B cell (primary cell): ENCODE measurements at regions of chr4 and their contacts with region 1.

Region 1: DNA sequence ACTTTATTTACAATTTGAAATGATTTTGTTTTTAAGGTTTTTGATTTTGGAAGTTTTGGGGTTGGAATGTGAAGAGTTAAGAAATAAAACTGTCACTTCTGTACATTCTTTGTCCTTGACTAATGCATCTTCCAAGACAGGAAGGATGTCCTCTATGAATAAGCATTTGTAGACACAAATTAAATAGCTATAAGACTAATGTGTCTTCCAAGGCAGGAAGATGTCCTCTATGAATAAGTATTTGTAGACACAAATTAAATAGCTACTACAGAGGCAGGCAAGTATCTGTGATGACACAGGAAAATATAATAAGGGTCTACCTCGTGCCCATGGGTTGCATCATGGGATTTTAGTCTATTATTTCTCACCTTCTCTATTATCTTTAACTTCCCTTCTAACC is 14.5 kb downstream of the PRSS48 start:
- DNase-seq: no peak
- ATAC-seq: no peak
- H3K4me3 ChIP-seq: no peak overlapping the region
- H3K4me3 Mint-ChIP-seq: no peak overlapping the region
- H3K27ac ChIP-seq: no peak overlapping the region
- H3K27ac Mint-ChIP-seq: no peak overlapping the region
- H3K4me1 ChIP-seq: no peaks in the 10 kb centered on the region
- H3K4me1 Mint-ChIP-seq: no peaks in the 10 kb centered on the region
- H3K27me3 ChIP-seq: no peaks in the 10 kb centered on the region
- H3K27me3 Mint-ChIP-seq: no peaks in the 10 kb centered on the region
- CTCF ChIP-seq: no peak

Region 2: DNA sequence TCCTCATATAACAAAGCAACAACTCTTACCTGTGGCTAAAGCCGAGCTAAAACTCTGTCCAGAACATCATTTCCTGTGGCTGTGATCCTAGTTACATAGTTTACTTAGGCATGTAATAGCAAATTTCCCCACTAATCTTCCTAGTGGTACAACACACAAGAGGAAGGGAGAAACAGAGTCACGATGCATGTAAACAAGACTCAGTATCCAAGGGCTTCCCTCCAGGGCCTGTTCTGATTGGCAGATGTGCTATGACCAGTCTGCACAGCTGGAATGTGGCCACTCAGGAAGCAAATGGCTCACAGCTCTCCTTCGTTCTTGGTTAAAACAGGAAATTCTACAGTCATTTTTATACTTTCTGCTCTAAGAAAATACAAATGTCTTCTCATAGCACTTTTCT is 63.8 kb before region 1 on chr4:
- CTCF ChIA-PET with region 1: no interaction called
- POLR2A ChIA-PET with region 1: no interaction called
- intact Hi-C with region 1: no loop called
- DNase-seq: no peak
- ATAC-seq: no peak
- H3K4me3 ChIP-seq: no peak overlapping the region
- H3K4me3 Mint-ChIP-seq: no peak overlapping the region
- H3K27ac ChIP-seq: no peak overlapping the region
- H3K27ac Mint-ChIP-seq: no peak overlapping the region
- H3K4me1 ChIP-seq: no peaks in the 10 kb centered on the region
- H3K4me1 Mint-ChIP-seq: no peaks in the 10 kb centered on the region
- H3K27me3 ChIP-seq: peaks cover 0 to 6% (median 2%) of the 10 kb centered on the region in 4 experiments
- H3K27me3 Mint-ChIP-seq: peaks cover 10% of the 10 kb centered on the region
- CTCF ChIP-seq: no peak

Region 3: GRCh38 chr4:151250706-151251105 is 40.8 kb before region 1 on chr4:
- CTCF ChIA-PET with region 1: no interaction called
- POLR2A ChIA-PET with region 1: no interaction called
- intact Hi-C with region 1: loop called (anchors 1 kb)
- DNase-seq: no peak
- ATAC-seq: no peak
- H3K4me3 ChIP-seq: no peak overlapping the region
- H3K4me3 Mint-ChIP-seq: no peak overlapping the region
- H3K27ac ChIP-seq: no peak overlapping the region
- H3K27ac Mint-ChIP-seq: no peak overlapping the region
- H3K4me1 ChIP-seq: no peaks in the 10 kb centered on the region
- H3K4me1 Mint-ChIP-seq: no peaks in the 10 kb centered on the region
- H3K27me3 ChIP-seq: no peaks in the 10 kb centered on the region
- H3K27me3 Mint-ChIP-seq: no peaks in the 10 kb centered on the region
- CTCF ChIP-seq: no peak

Region 4: GRCh38 chr4:151325111-151325948 is 33.8 kb after region 1 on chr4 and contains the start of gene SH3D19:
- CTCF ChIA-PET with region 1: no interaction called
- POLR2A ChIA-PET with region 1: no interaction called
- intact Hi-C with region 1: no loop called
- DNase-seq: no peak
- ATAC-seq: no peak
- H3K4me3 ChIP-seq: no peak within 1 kb of the TSS
- H3K4me3 Mint-ChIP-seq: peak within 1 kb of the TSS; percentile 41
- H3K27ac ChIP-seq: no peak within 1 kb of the TSS
- H3K27ac Mint-ChIP-seq: no peak within 1 kb of the TSS
- H3K4me1 ChIP-seq: no peaks in the 10 kb centered on the region
- H3K4me1 Mint-ChIP-seq: peaks cover 11% of the 10 kb centered on the region
- H3K27me3 ChIP-seq: peaks cover 0 to 26% (median 11%) of the 10 kb centered on the region in 4 experiments
- H3K27me3 Mint-ChIP-seq: peaks cover 56% of the 10 kb centered on the region
- CTCF ChIP-seq: no peak
- total RNA-seq, gene SH3D19: not detected in 2 replicates